CD4-positive, alpha-beta memory T cell (primary cell): ENCODE measurements at regions of chr4 and their contacts with region 1.

Region 1: DNA sequence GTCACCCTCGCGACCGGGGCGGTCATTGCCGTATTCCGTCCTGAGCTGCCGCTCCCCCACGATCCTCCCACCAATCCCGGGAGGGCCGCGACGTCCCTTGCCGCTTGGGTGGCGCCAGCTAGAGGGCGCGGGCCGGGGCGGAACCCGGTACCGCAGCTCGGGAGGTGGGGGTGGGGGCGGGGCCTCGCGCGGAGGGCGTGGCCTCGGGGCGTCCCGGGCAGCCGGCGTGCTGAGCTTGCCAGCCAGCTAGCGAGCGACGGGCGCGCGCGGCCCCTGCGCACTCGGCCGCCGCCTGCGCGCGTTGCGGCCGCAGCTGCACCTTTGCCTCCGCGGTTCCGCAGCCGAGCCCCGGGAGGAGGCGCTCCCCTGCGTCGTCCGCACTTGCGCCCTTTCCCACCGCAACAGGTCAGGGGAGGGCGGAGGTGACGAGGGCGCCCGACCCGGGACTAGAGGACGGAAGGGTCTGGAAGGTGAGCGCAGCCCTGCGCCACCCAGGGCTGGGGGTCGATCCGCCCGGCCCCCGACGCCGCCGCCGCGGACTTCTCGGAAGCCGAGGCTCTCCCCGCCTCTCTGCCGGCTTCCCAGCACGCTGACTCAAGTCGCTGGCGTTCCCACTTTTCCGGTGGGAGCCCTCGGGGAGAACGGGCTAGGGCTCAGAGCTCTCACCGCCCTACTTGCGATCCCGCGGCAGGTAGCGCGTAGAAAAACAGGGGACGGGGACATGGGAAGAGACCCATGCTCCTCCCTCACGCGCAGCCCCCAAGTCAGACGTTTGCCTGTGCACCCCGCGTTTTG is at the start of gene AFF1:
- DNase-seq: peak; percentile 85 to 90 (median 87)
- H3K4me3 ChIP-seq: peak within 1 kb of the TSS; percentile 70 to 80
- H3K4me3 Mint-ChIP-seq: peak within 1 kb of the TSS; percentile 89 to 97 (median 94)
- H3K27ac ChIP-seq: peak within 1 kb of the TSS; percentile 84
- H3K27ac Mint-ChIP-seq: peak within 1 kb of the TSS; percentile 94 to 98 (median 97)
- H3K4me1 ChIP-seq: peaks cover 48% of the 10 kb centered on the region
- H3K4me1 Mint-ChIP-seq: peaks cover 38 to 58% (median 46%) of the 10 kb centered on the region in 4 donors
- H3K27me3 ChIP-seq: no peaks in the 10 kb centered on the region
- H3K27me3 Mint-ChIP-seq: no peaks in the 10 kb centered on the region
- total RNA-seq, gene AFF1: 105 to 108 TPM

Region 2: GRCh38 chr4:86878640-86879039 is 56.3 kb before region 1 on chr4:
- CTCF ChIA-PET with region 1: no interaction called
- POLR2A ChIA-PET with region 1: no interaction called
- intact Hi-C with region 1: no loop called
- DNase-seq: no peak
- H3K4me3 ChIP-seq: no peak overlapping the region
- H3K4me3 Mint-ChIP-seq: no peak overlapping the region
- H3K27ac ChIP-seq: no peak overlapping the region
- H3K27ac Mint-ChIP-seq: no peak overlapping the region
- H3K4me1 ChIP-seq: no peaks in the 10 kb centered on the region
- H3K4me1 Mint-ChIP-seq: no peaks in the 10 kb centered on the region
- H3K27me3 ChIP-seq: no peaks in the 10 kb centered on the region
- H3K27me3 Mint-ChIP-seq: peaks cover 0 to under 1% of the 10 kb centered on the region in 2 donors

Region 3: GRCh38 chr4:86955888-86956451 is 21.0 kb after region 1 on chr4:
- CTCF ChIA-PET with region 1: interaction called, 5 read pairs
- POLR2A ChIA-PET with region 1: interaction called, 6 read pairs
- intact Hi-C with region 1: loop called (anchors 2 kb)
- DNase-seq: no peak
- H3K4me3 ChIP-seq: no peak overlapping the region
- H3K4me3 Mint-ChIP-seq: no peak overlapping the region
- H3K27ac ChIP-seq: no peak overlapping the region
- H3K27ac Mint-ChIP-seq: no peak overlapping the region
- H3K4me1 ChIP-seq: no peaks in the 10 kb centered on the region
- H3K4me1 Mint-ChIP-seq: peaks cover 23 to 28% (median 26%) of the 10 kb centered on the region in 4 donors
- H3K27me3 ChIP-seq: no peaks in the 10 kb centered on the region
- H3K27me3 Mint-ChIP-seq: no peaks in the 10 kb centered on the region

Region 4: DNA sequence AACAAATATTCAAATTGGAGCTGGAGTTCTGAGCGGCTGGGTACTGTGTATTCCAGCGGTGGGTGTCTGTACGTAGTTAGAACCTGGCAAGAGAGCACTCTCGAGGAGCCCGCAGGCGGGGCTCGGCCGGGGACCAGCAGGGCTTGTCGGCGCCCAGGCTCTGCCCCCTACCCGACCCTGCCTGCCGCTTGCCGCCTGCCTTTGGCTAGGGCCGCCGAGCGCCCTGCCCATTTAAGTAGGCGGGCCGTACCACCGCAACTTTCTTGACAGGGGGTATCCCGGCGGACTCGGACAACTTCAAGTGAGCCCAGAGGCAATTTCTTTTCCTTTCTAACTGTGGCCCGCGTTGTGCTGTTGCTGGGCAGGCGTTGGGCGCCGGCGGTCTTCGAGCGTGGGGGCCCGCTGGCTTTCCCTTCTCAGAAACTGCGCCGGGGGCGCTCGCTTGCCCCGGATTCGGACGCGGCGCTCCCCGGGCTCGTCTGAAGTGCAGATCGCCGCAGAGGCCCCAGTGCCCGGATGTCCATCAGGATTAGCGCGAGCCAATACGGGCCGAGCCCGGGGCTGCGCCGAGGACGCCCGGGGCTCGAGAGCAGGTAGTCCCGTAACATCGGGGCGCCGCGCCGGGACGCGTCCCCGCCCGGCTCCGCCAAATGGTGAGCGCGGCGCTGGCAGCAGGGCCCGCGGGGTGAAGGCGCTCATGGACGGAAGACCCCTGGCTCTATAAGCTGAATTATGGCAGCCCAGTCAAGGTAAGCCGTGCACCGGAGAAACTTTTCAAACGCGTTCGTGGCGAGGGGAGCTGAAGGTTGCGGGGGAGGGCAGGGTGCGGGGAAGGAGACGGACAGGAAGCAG is 71.9 kb after region 1 on chr4:
- CTCF ChIA-PET with region 1: interaction called, 99 read pairs
- POLR2A ChIA-PET with region 1: interaction called, 376 read pairs
- intact Hi-C with region 1: loop called (anchors 1 kb)
- DNase-seq: peak; percentile 90 to 95 (median 91)
- H3K4me3 ChIP-seq: peak overlapping the region; percentile 82 to 86
- H3K4me3 Mint-ChIP-seq: peak overlapping the region; percentile 88 to 99 (median 94)
- H3K27ac ChIP-seq: peak overlapping the region; percentile 83
- H3K27ac Mint-ChIP-seq: peak overlapping the region; percentile 91 to 100 (median 97)
- H3K4me1 ChIP-seq: peaks cover 53% of the 10 kb centered on the region
- H3K4me1 Mint-ChIP-seq: peaks cover 47 to 58% (median 53%) of the 10 kb centered on the region in 4 donors
- H3K27me3 ChIP-seq: no peaks in the 10 kb centered on the region
- H3K27me3 Mint-ChIP-seq: no peaks in the 10 kb centered on the region

Region 5: DNA sequence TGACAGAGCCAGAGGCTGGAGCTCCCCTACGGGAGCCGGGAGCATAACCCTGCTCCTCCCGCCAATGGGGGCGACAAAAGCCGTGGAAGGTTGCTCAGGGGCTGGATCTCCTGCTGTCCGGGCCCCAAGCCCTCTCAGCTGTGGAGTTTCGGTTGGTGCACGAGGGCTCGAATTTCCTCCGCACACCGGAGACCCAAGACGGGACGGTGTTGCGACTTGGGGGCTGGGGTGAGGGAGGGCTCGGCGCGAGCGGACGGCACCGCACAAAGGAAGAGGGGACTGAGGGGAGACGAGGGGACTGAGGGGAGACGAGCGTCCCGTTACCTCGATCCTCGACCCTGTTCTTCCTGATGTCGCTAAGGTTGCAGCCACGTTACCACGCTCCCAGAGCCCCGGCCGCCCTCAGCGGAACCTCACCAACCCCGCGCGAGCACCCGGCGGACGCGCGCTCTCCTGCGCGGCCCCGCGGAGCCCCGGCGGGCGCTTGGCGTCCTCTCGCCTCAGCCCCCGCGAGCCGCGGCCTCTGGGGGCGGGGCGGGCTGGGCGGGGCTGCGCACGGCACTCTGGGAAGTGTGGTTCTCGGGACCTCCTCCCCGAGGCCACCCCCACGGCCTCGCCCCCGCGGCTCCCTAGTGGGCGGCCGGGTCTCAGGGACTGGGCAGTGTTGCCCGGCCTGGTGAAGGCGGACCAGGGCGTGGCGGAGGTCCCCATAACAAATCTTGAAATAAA is 285.3 kb after region 1 on chr4 and contains the start of gene KLHL8:
- CTCF ChIA-PET with region 1: no interaction called
- POLR2A ChIA-PET with region 1: interaction called, 8 read pairs
- intact Hi-C with region 1: loop called (anchors 1 kb)
- DNase-seq: peak; percentile 84 to 91 (median 90)
- H3K4me3 ChIP-seq: peak within 1 kb of the TSS; percentile 82 to 89
- H3K4me3 Mint-ChIP-seq: peak within 1 kb of the TSS; percentile 91 to 98 (median 95)
- H3K27ac ChIP-seq: peak within 1 kb of the TSS; percentile 85
- H3K27ac Mint-ChIP-seq: peak within 1 kb of the TSS; percentile 81 to 96 (median 94)
- H3K4me1 ChIP-seq: peaks cover 16% of the 10 kb centered on the region
- H3K4me1 Mint-ChIP-seq: peaks cover 9 to 23% (median 16%) of the 10 kb centered on the region in 4 donors
- H3K27me3 ChIP-seq: no peaks in the 10 kb centered on the region
- H3K27me3 Mint-ChIP-seq: no peaks in the 10 kb centered on the region
- total RNA-seq, gene KLHL8: 11.0 to 11.4 TPM

Region 6: GRCh38 chr4:88284439-88285234 is 1349.7 kb after region 1 on chr4 and contains the start of gene PPM1K:
- CTCF ChIA-PET with region 1: no interaction called
- POLR2A ChIA-PET with region 1: interaction called, 17 read pairs
- intact Hi-C with region 1: loop called (anchors 1 kb)
- DNase-seq: peak; percentile 98 to 100 (median 99)
- H3K4me3 ChIP-seq: peak within 1 kb of the TSS; percentile 83 to 92
- H3K4me3 Mint-ChIP-seq: peak within 1 kb of the TSS; percentile 94 to 99 (median 96)
- H3K27ac ChIP-seq: peak within 1 kb of the TSS; percentile 89
- H3K27ac Mint-ChIP-seq: peak within 1 kb of the TSS; percentile 99 to 100 (median 99)
- H3K4me1 ChIP-seq: peaks cover 40% of the 10 kb centered on the region
- H3K4me1 Mint-ChIP-seq: peaks cover 29 to 56% (median 38%) of the 10 kb centered on the region in 4 donors
- H3K27me3 ChIP-seq: no peaks in the 10 kb centered on the region
- H3K27me3 Mint-ChIP-seq: peaks cover 0 to 1% of the 10 kb centered on the region in 2 donors
- total RNA-seq, gene PPM1K: 82.2 to 84.3 TPM